ENCODE measurements at regions of chr19 and their contacts with region 1.

Region 1: DNA sequence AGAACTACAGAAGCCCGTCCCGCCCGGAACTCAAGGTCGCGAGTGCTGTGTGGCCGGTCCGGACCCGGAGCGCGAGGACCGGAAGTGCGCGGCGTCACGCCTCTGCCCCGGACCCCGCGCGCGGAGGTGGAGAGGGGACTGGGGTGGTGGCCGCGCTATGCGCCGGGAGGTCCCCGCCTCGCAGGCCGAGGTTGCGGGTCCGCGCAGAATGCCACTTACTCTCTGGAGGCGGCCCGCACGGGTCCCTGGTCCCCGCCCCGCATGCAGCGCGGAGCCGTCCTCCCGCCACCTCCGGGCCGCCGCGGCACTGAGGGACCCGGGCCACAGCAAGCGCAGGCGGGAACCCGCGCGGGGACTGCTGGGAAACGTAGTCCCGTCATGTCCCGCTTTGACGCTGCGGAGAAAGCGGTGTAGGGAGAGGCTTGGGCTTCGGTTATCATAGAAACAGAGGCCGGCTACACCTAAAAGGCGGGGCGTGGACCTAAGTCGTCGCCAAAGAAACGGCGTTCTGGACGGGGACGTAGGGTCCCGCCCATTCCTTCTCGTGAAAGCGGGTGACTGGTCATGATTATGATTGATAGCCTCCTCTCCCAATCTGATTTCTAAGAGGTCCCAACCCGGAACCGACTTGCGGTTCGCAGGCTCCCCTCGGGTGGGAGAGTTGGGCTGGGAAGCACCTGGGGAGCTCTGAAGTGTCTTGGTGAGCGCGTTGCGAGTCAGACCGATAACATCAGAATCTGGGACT is at the start of gene ZNF837:
- DNase-seq: peak; percentile 94 to 100 (median 97)
- ATAC-seq: peak; percentile 82
- H3K4me3 ChIP-seq: peak within 1 kb of the TSS; percentile 62 to 92
- H3K4me3 Mint-ChIP-seq: peak within 1 kb of the TSS; percentile 98
- H3K27ac ChIP-seq: peak within 1 kb of the TSS; percentile 90 to 96
- H3K27ac Mint-ChIP-seq: peak within 1 kb of the TSS; percentile 98
- H3K4me1 ChIP-seq: peaks cover 31% of the 10 kb centered on the region
- H3K4me1 Mint-ChIP-seq: peaks cover 35% of the 10 kb centered on the region
- H3K27me3 ChIP-seq: no peaks in the 10 kb centered on the region
- H3K27me3 Mint-ChIP-seq: no peaks in the 10 kb centered on the region
- CTCF ChIP-seq: no peak
- total RNA-seq, gene ZNF837: 1.2 to 1.3 TPM

Region 2: DNA sequence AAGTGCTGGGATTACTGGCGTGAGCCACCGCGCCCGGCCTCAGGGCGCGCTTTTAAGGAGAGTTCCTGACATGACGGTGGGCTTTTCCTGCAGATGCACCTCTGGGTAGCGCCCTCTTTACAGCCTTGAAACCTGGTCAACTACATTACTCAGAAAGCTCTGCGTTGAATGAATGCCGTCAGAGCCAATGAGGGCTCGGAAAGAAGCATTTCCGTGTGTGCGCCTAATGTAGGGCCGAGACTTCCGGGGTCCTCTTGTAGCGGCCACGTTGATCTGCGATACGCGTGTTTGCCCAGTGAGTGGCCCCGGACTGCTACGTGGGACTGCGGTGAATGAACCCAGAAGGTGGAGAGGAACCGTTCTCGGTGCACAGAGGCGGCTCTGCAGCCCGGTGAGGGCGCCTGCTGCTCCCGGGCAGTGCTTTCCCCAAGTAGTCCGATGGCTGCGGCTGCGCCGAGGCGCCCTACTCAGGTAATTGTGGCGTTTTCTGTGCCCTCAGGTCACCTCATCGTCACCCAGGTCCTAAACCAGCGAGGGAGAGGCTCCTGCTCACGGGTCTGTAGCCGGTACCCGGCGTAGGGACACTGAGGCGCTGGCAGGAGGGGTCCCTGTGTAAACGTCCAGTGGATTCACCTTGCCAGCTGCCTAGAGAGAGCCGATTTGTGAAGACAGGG is 561.3 kb before region 1 on chr19:
- CTCF ChIA-PET with region 1: no interaction called
- POLR2A ChIA-PET with region 1: no interaction called
- intact Hi-C with region 1: loop called in 1 of 2 experiments (anchors 10 kb)
- DNase-seq: peak; percentile 60 to 95 (median 81)
- ATAC-seq: peak; percentile 83
- H3K4me3 ChIP-seq: peak overlapping the region; percentile 57 to 85
- H3K4me3 Mint-ChIP-seq: peak overlapping the region; percentile 96
- H3K27ac ChIP-seq: peak overlapping the region; percentile 81 to 89
- H3K27ac Mint-ChIP-seq: peak overlapping the region; percentile 97
- H3K4me1 ChIP-seq: peaks cover 15% of the 10 kb centered on the region
- H3K4me1 Mint-ChIP-seq: peaks cover 63% of the 10 kb centered on the region
- H3K27me3 ChIP-seq: no peaks in the 10 kb centered on the region
- H3K27me3 Mint-ChIP-seq: no peaks in the 10 kb centered on the region
- CTCF ChIP-seq: no peak

Region 3: DNA sequence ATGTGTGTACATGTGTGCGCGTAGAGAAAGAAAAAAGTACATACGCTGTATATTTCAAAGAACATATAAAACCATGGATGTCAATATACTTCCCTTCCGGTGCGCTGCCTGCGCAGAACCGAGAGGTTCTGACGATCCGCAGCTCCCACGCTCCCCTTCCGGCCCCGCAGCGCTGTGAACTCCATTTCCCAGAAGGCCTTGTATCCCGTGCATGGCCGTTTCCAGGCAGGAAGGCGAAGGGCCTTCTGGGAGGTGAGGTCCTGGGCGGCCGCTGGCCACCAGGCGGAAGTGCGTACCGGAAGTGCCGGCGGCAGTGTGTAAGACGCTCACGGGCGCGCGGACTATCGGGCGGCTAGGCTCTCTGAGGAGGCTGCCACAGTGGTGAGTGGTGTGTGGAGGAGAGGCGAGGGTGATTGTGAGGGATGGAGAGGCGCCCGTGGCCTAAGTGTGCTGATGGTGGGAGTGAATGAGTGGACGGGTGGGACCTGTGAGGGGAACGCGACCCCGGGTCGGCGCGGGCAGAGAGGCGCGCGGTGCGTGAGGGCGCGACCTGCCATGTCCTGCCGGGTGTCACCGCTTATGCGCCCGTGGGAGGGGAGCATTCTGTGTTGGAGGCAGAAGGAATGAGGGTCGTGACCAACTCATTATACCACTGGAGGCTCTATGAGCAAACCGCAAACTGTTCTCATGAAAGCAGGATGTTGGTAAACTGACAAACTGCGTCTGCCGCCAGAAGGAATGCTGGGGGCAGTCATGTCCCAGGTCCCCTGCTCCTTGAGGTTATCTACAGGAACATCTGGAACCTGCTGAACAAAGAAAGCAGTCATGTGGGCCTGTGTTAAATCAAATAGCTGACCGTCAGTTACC is 75.6 kb before region 1 on chr19 and contains the start of gene ERVK3-1:
- CTCF ChIA-PET with region 1: no interaction called
- POLR2A ChIA-PET with region 1: no interaction called
- intact Hi-C with region 1: loop called (anchors 1 kb)
- DNase-seq: peak; percentile 89 to 99 (median 93)
- ATAC-seq: peak; percentile 96
- H3K4me3 ChIP-seq: peak within 1 kb of the TSS; percentile 82 to 89
- H3K4me3 Mint-ChIP-seq: peak within 1 kb of the TSS; percentile 98
- H3K27ac ChIP-seq: peak within 1 kb of the TSS; percentile 93 to 95
- H3K27ac Mint-ChIP-seq: peak within 1 kb of the TSS; percentile 99
- H3K4me1 ChIP-seq: peaks cover 27% of the 10 kb centered on the region
- H3K4me1 Mint-ChIP-seq: peaks cover 53% of the 10 kb centered on the region
- H3K27me3 ChIP-seq: no peaks in the 10 kb centered on the region
- H3K27me3 Mint-ChIP-seq: no peaks in the 10 kb centered on the region
- CTCF ChIP-seq: no peak
- total RNA-seq, gene ERVK3-1: 174 to 182 TPM

Region 4: DNA sequence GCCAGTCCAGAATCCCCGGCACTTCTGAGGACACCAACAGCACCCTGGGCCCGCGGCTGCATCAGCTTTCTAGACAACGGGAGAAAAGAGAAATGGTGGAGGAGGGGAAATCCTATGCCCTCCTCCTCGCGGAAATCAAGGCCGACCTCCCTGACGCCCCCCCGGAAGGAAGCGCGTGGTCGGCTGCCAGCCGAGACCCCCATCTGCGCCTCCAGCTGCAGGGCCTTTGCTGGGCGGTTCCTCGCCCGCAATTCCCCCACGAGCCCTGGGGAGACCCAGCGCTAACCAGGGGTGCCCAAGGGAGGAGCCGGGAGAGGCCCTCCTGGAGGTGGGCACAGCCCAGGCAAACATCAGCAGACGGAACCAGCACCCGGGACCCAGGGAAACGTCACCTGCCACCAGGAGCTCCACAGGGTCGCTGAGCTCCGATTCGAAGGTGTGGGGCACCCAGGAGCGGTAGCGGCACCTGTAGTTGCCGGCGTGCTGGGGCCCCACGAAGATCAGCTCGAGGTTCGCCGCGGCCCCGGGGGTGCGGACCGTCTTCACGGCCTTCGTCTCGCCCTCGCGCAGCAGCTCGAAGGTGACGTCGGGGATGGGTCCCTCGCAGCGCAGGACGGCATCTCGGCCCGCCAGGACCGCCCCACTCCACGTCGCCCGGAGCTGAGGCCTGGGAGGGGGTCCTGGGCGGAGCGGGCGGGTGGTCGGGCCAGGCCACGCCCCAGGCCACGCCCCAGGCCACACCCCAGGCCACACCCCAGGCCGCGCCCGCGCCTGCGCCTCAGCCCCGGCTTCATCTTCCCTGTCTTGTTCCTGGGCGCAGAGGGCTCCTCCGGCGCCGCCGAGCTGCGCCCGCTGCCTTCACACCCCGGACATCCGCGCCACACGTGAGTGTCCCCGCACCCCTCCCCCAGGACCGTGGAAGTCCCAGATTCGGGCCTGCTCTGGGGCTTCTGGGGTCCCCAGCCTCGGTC is 33.6 kb before region 1 on chr19:
- CTCF ChIA-PET with region 1: no interaction called
- POLR2A ChIA-PET with region 1: interaction called, 4 read pairs
- intact Hi-C with region 1: loop called (anchors 1 kb)
- DNase-seq: peak; percentile 41 to 86 (median 71)
- ATAC-seq: peak; percentile 90
- H3K4me3 ChIP-seq: peak overlapping the region; percentile 72 to 95
- H3K4me3 Mint-ChIP-seq: peak overlapping the region; percentile 91
- H3K27ac ChIP-seq: peak overlapping the region; percentile 63 to 85
- H3K27ac Mint-ChIP-seq: peak overlapping the region; percentile 93
- H3K4me1 ChIP-seq: peaks cover 17% of the 10 kb centered on the region
- H3K4me1 Mint-ChIP-seq: peaks cover 35% of the 10 kb centered on the region
- H3K27me3 ChIP-seq: no peaks in the 10 kb centered on the region
- H3K27me3 Mint-ChIP-seq: no peaks in the 10 kb centered on the region
- CTCF ChIP-seq: no peak

Region 5: GRCh38 chr19:58400916-58401839 is 20.3 kb after region 1 on chr19:
- CTCF ChIA-PET with region 1: no interaction called
- POLR2A ChIA-PET with region 1: no interaction called
- intact Hi-C with region 1: loop called (anchors 1 kb)
- DNase-seq: peak; percentile 97 to 100 (median 99)
- ATAC-seq: peak; percentile 97
- H3K4me3 ChIP-seq: peak overlapping the region; percentile 72 to 77
- H3K4me3 Mint-ChIP-seq: peak overlapping the region; percentile 93
- H3K27ac ChIP-seq: peak overlapping the region; percentile 93 to 94
- H3K27ac Mint-ChIP-seq: peak overlapping the region; percentile 96
- H3K4me1 ChIP-seq: peaks cover 12% of the 10 kb centered on the region
- H3K4me1 Mint-ChIP-seq: peaks cover 15% of the 10 kb centered on the region
- H3K27me3 ChIP-seq: peaks cover 0 to 4% of the 10 kb centered on the region in 2 experiments
- H3K27me3 Mint-ChIP-seq: peaks cover 10% of the 10 kb centered on the region
- CTCF ChIP-seq: no peak

Region 6: DNA sequence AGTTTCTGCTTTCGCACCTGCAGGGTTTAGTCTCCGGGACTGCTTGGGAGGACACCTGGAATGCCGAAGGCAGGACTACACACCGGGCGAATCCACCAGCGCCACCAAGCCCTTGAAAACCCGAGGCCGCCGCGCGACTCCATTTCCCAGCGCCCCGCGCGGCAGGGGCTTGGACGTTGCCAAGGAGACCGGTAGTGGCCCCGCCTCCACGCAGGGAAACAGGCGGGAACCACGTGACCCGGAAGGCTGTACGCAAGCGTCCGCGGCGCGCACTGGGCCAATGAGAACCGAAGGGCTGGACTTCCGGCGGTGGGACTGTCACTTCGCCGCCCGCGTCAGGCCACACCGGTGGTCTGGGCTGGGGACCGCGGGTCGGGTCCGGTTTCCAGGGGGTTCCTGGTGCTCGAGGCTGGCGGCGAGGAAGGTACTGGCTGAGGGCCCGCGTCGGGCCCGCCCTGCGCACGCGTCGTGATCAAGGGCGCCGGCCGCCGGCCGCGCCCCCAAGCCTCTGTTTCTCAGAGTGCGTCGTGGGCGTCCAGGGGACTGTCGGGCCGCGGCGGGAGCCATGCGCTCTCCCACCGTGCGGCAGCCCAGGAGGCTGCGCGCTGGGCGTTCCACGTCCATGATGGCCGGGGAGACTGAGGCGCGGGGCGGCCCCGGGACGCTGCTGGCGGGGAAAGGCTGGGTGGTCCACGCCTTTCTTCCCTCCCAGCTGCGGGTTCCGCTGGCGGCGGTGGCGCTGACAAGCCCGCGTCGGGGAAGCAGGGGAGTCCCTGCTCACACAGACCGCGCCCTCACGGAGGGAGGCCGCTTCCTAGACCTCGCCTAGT is 86.1 kb after region 1 on chr19 and contains the start of gene ZNF324:
- CTCF ChIA-PET with region 1: no interaction called
- POLR2A ChIA-PET with region 1: no interaction called
- intact Hi-C with region 1: loop called (anchors 1 to 2 kb)
- DNase-seq: peak; percentile 93 to 99 (median 98)
- ATAC-seq: peak; percentile 88
- H3K4me3 ChIP-seq: peak within 1 kb of the TSS; percentile 63 to 93
- H3K4me3 Mint-ChIP-seq: peak within 1 kb of the TSS; percentile 87
- H3K27ac ChIP-seq: peak within 1 kb of the TSS; percentile 88 to 91
- H3K27ac Mint-ChIP-seq: peak within 1 kb of the TSS; percentile 89
- H3K4me1 ChIP-seq: peaks cover 10% of the 10 kb centered on the region
- H3K4me1 Mint-ChIP-seq: peaks cover 25% of the 10 kb centered on the region
- H3K27me3 ChIP-seq: peaks cover 0 to 3% of the 10 kb centered on the region in 2 experiments
- H3K27me3 Mint-ChIP-seq: no peaks in the 10 kb centered on the region
- CTCF ChIP-seq: no peak
- total RNA-seq, gene ZNF324: 26.9 to 30.5 TPM

Region 7: GRCh38 chr19:58499021-58499927 is 118.4 kb after region 1 on chr19:
- CTCF ChIA-PET with region 1: no interaction called
- POLR2A ChIA-PET with region 1: no interaction called
- intact Hi-C with region 1: loop called in 1 of 2 experiments (anchors 1 kb)
- DNase-seq: peak; percentile 83 to 97 (median 95)
- ATAC-seq: peak; percentile 86
- H3K4me3 ChIP-seq: peak overlapping the region; percentile 64
- H3K4me3 Mint-ChIP-seq: peak overlapping the region; percentile 92
- H3K27ac ChIP-seq: peak overlapping the region; percentile 22 to 88
- H3K27ac Mint-ChIP-seq: peak overlapping the region; percentile 96
- H3K4me1 ChIP-seq: peaks cover 17% of the 10 kb centered on the region
- H3K4me1 Mint-ChIP-seq: peaks cover 25% of the 10 kb centered on the region
- H3K27me3 ChIP-seq: no peaks in the 10 kb centered on the region
- H3K27me3 Mint-ChIP-seq: no peaks in the 10 kb centered on the region
- CTCF ChIP-seq: no peak

Region 8: DNA sequence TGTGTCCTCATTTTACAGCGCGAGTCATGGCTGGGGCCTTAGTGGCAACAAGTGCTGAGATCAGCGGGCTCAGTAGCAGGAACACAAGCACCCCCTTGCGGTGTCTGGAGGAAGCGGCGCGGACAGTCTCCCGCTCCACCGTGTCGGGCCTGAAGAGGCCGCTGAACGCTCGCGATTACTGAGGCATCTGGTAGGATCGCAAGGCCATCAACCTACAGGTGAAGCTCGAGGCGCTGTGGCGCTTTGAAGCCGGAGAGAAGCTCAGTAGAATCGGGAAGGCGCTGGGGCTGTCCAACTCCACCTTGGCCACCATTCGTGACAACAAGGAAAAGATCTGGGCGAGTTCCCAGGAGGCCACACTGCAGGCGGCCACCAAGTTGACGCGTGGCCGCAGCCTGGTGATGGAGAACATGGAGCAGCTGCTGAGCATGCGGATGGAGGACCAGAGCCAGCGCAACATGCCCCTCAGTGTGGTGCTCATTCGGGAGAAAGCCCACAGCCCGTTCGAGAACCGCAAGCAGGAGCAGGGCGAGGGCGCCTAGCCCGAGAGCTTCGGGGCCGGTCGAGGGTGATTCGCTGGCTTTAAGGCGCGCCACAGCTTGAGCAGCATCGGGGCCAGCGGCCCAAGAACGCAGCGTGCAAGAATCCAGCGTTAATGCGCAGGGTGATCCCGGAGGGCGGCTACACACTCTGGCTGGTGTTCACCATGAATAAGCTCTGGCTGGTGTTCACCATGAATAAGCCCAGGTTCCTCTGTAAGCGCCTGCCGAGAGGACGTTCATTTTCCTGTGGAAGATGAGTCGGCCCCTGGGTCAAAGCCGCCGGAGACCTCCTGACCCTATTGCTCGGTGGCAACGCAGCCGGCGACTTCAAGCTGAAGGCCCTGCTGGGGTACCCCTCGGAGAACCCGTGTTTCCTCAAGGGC is 200.6 kb after region 1 on chr19:
- CTCF ChIA-PET with region 1: no interaction called
- POLR2A ChIA-PET with region 1: no interaction called
- intact Hi-C with region 1: no loop called
- DNase-seq: peak; percentile 81 to 93 (median 91)
- ATAC-seq: peak; percentile 100
- H3K4me3 ChIP-seq: no peak overlapping the region
- H3K4me3 Mint-ChIP-seq: no peak overlapping the region
- H3K27ac ChIP-seq: peak overlapping the region in 1 of 2 experiments; percentile 56
- H3K27ac Mint-ChIP-seq: peak overlapping the region; percentile 82
- H3K4me1 ChIP-seq: peaks cover 6% of the 10 kb centered on the region
- H3K4me1 Mint-ChIP-seq: peaks cover 11% of the 10 kb centered on the region
- H3K27me3 ChIP-seq: no peaks in the 10 kb centered on the region
- H3K27me3 Mint-ChIP-seq: no peaks in the 10 kb centered on the region
- CTCF ChIP-seq: peak; percentile 88

Measured in CD8-positive, alpha-beta T cell (primary cell).